Dorsolateral prefrontal cortex (tissue), 120 donors: ENCODE measurements at regions of chr16 and their contacts with region 1.

Region 1: GRCh38 chr16:72467157-72467759 is 295.3 kb upstream of the PMFBP1 start:
- DNase-seq: no peak
- H3K4me3 ChIP-seq: no peak overlapping the region
- H3K27ac ChIP-seq: no peak overlapping the region
- H3K27me3 ChIP-seq: no peaks in the 10 kb centered on the region
- CTCF ChIP-seq: peak; percentile 18 to 88 (median 68)

Region 2: DNA sequence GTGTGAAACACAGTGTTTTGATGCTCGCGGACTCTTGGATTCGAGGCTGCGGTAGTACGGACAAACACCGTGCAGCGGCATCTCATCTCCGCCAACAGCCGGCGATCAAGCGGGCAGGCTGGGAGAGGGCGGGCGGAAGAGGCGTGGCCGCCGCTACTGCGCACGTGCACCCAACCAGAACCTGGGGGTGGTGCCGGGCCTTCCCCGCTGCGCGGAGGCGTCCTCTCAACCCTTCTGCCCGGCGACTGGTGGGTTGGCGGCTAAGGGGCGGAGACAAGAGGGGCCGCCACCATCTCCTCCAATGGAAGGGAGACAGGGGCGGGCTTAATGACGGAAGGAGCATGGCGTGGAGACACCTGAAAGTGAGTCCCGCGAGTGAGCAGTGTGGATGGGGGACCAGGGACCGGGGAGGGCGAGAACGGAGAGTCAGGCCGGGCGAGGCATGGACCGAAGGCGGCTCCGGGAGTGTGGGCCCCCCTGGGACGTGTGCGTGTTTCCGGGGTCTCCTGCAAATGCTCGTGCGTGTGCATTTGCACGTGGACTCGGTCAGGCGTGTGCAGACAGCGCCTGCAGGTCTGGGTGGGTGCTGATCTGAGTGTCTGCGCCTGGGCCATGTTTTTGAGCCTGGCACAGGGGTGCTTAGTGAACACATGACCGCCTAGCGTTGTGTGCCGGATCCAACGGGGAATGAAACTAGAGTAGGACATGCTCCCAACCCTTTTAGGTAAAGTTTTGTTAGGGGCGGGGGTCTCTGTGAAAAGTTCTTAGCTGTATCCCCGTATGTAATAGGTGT is 458.6 kb before region 1 on chr16 and contains the start of gene DHODH:
- intact Hi-C with region 1: no loop called
- DNase-seq: peak; percentile 93 to 99 (median 98)
- H3K4me3 ChIP-seq: peak within 1 kb of the TSS; percentile 64 to 100 (median 94)
- H3K27ac ChIP-seq: peak within 1 kb of the TSS in 42 of 59 donors; percentile 3 to 79 (median 54)
- H3K27me3 ChIP-seq: no peaks in the 10 kb centered on the region
- CTCF ChIP-seq: peak in 48 of 56 donors; percentile 9 to 64 (median 39)
- total RNA-seq, gene DHODH: 2.7 to 10.4 (median 5.8) TPM

Region 3: GRCh38 chr16:72124761-72125634 is 342.3 kb before region 1 on chr16:
- intact Hi-C with region 1: loop called in 1 of 2 experiments (anchors 10 kb)
- DNase-seq: peak; percentile 40 to 82 (median 62)
- H3K4me3 ChIP-seq: peak overlapping the region in 25 of 59 donors; percentile 1 to 49 (median 23)
- H3K27ac ChIP-seq: peak overlapping the region in 46 of 59 donors; percentile 2 to 82 (median 64)
- H3K27me3 ChIP-seq: no peaks in the 10 kb centered on the region
- CTCF ChIP-seq: peak; percentile 55 to 92 (median 83)

Region 4: GRCh38 chr16:72241930-72242329 is 225.3 kb before region 1 on chr16:
- intact Hi-C with region 1: loop called (anchors 5 to 10 kb)
- DNase-seq: peak in 5 of 10 donors; percentile 7 to 41 (median 36)
- H3K4me3 ChIP-seq: peak overlapping the region in 32 of 59 donors; percentile 4 to 53 (median 32)
- H3K27ac ChIP-seq: peak overlapping the region in 1 of 59 donors; percentile 37
- H3K27me3 ChIP-seq: no peaks in the 10 kb centered on the region
- CTCF ChIP-seq: peak; percentile 43 to 92 (median 82)

Region 5: GRCh38 chr16:72400257-72400882 is 66.9 kb before region 1 on chr16:
- intact Hi-C with region 1: loop called in 1 of 2 experiments (anchors 2 kb)
- DNase-seq: peak in 4 of 10 donors; percentile 3 to 31 (median 23)
- H3K4me3 ChIP-seq: peak overlapping the region in 2 of 59 donors; percentile 12 to 15
- H3K27ac ChIP-seq: peak overlapping the region in 2 of 59 donors; percentile 5 to 11
- H3K27me3 ChIP-seq: no peaks in the 10 kb centered on the region
- CTCF ChIP-seq: peak; percentile 48 to 93 (median 80)

Region 6: GRCh38 chr16:72425571-72426341 is 41.5 kb before region 1 on chr16:
- intact Hi-C with region 1: loop called in 1 of 2 experiments (anchors 5 kb)
- DNase-seq: peak; percentile 40 to 73 (median 62)
- H3K4me3 ChIP-seq: peak overlapping the region; percentile 25 to 76 (median 61)
- H3K27ac ChIP-seq: peak overlapping the region; percentile 70 to 99 (median 98)
- H3K27me3 ChIP-seq: peaks cover 0 to 5% (median 0%) of the 10 kb centered on the region in 45 donors
- CTCF ChIP-seq: peak in 5 of 56 donors; percentile 2 to 20 (median 14)